Gastrocnemius medialis (tissue), 4 donors: ENCODE measurements at regions of chr2 and their contacts with region 1.

Region 1: GRCh38 chr2:176001916-176002687 is at the start of gene LNPK:
- DNase-seq: peak; percentile 89 to 94
- ATAC-seq: peak; percentile 82 to 85
- H3K4me3 ChIP-seq: peak within 1 kb of the TSS; percentile 76 to 90 (median 84)
- H3K27ac ChIP-seq: peak within 1 kb of the TSS; percentile 95 to 98 (median 98)
- H3K4me1 ChIP-seq: peaks cover 32 to 51% of the 10 kb centered on the region in 2 donors
- H3K27me3 ChIP-seq: no peaks in the 10 kb centered on the region
- CTCF ChIP-seq: peak in 2 of 5 experiments; percentile 18 to 25
- POLR2A ChIP-seq: peak; percentile 91 to 94
- total RNA-seq, gene LNPK: 23.0 to 84.4 (median 50.1) TPM

Region 2: GRCh38 chr2:175690113-175690837 is 311.8 kb before region 1 on chr2:
- in situ Hi-C with region 1: no loop called
- intact Hi-C with region 1: loop called (anchors 2 kb)
- DNase-seq: no peak
- ATAC-seq: peak; percentile 69 to 85
- H3K4me3 ChIP-seq: no peak overlapping the region
- H3K27ac ChIP-seq: no peak overlapping the region
- H3K4me1 ChIP-seq: no peaks in the 10 kb centered on the region
- H3K27me3 ChIP-seq: peaks cover 0 to 14% (median 2%) of the 10 kb centered on the region in 3 donors
- CTCF ChIP-seq: peak; percentile 68 to 89 (median 82)
- POLR2A ChIP-seq: no peak

Region 3: GRCh38 chr2:175755169-175755568 is 246.9 kb before region 1 on chr2:
- in situ Hi-C with region 1: no loop called
- intact Hi-C with region 1: loop called (anchors 5 kb)
- DNase-seq: no peak
- ATAC-seq: no peak
- H3K4me3 ChIP-seq: no peak overlapping the region
- H3K27ac ChIP-seq: peak overlapping the region in 1 of 4 donors; percentile 64
- H3K4me1 ChIP-seq: peaks cover 0 to 4% of the 10 kb centered on the region in 2 donors
- H3K27me3 ChIP-seq: no peaks in the 10 kb centered on the region
- CTCF ChIP-seq: no peak
- POLR2A ChIP-seq: no peak

Region 4: GRCh38 chr2:175855794-175856453 is 146.2 kb before region 1 on chr2:
- in situ Hi-C with region 1: no loop called
- intact Hi-C with region 1: loop called (anchors 2 kb)
- DNase-seq: peak; percentile 86 to 93
- ATAC-seq: peak; percentile 96
- H3K4me3 ChIP-seq: peak overlapping the region; percentile 21 to 39 (median 34)
- H3K27ac ChIP-seq: peak overlapping the region; percentile 84 to 91 (median 86)
- H3K4me1 ChIP-seq: peaks cover 30 to 36% of the 10 kb centered on the region in 2 donors
- H3K27me3 ChIP-seq: no peaks in the 10 kb centered on the region
- CTCF ChIP-seq: no peak
- POLR2A ChIP-seq: peak; percentile 36 to 62

Region 5: GRCh38 chr2:175929850-175930249 is 72.3 kb before region 1 on chr2:
- in situ Hi-C with region 1: no loop called
- intact Hi-C with region 1: loop called (anchors 1 kb)
- DNase-seq: peak; percentile 31 to 35
- ATAC-seq: peak; percentile 99
- H3K4me3 ChIP-seq: no peak overlapping the region
- H3K27ac ChIP-seq: peak overlapping the region; percentile 65 to 85 (median 84)
- H3K4me1 ChIP-seq: peaks cover 26 to 33% of the 10 kb centered on the region in 2 donors
- H3K27me3 ChIP-seq: no peaks in the 10 kb centered on the region
- CTCF ChIP-seq: no peak
- POLR2A ChIP-seq: peak; percentile 7 to 42

Region 6: GRCh38 chr2:175957845-175958244 is 44.3 kb before region 1 on chr2:
- in situ Hi-C with region 1: no loop called
- intact Hi-C with region 1: no loop called
- DNase-seq: no peak
- ATAC-seq: no peak
- H3K4me3 ChIP-seq: no peak overlapping the region
- H3K27ac ChIP-seq: no peak overlapping the region
- H3K4me1 ChIP-seq: peaks cover 0 to 7% of the 10 kb centered on the region in 2 donors
- H3K27me3 ChIP-seq: no peaks in the 10 kb centered on the region
- CTCF ChIP-seq: no peak
- POLR2A ChIP-seq: no peak

Region 7: GRCh38 chr2:176079831-176080539 is 77.9 kb after region 1 on chr2:
- in situ Hi-C with region 1: no loop called
- intact Hi-C with region 1: loop called (anchors 2 kb)
- DNase-seq: no peak
- ATAC-seq: peak; percentile 28 to 63
- H3K4me3 ChIP-seq: peak overlapping the region; percentile 12 to 39 (median 29)
- H3K27ac ChIP-seq: no peak overlapping the region
- H3K4me1 ChIP-seq: peaks cover 17 to 21% of the 10 kb centered on the region in 2 donors
- H3K27me3 ChIP-seq: peaks cover 93 to 97% (median 94%) of the 10 kb centered on the region in 3 donors
- CTCF ChIP-seq: peak; percentile 55 to 91 (median 69)
- POLR2A ChIP-seq: no peak

Region 8: DNA sequence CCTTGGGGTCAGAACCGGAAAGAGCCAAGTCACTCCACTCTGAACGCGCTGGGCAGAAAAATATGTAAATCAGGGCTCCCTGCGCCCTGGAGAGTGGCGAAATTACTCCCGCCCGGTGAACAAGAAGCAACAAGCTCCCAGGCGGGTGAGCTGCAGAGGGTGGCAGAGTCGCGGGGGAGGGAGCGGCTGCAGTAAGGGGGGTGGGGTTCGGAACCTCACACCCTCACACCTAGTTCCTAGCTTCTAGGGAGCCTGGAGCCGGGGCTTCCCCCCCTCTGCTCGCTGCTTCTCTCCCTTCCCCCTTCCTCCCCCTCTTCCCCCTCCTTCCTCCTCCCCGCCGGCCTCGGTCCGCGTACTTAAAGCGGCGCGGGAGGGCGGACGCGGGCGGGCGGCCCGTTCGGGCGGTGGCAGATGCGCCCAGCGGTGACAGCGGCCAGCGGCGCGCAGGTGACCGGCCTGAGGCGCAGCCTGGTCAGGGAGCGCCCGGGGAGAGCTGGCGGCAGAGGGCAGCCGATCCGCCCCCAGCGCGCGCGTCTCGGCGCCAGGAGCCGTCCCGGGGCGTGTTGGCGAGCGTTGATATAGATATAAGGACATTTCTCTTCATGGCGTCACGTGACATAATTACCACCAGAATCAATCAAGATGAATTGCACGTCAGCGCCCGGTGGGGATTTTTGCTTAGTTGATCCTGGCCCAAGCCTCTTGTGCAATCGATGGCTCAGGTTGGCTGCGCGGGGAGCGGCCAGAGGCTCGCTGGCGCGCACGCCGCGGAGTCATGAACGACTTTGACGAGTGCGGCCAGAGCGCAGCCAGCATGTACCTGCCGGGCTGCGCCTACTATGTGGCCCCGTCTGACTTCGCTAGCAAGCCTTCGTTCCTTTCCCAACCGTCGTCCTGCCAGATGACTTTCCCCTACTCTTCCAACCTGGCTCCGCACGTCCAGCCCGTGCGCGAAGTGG is 104.8 kb after region 1 on chr2 and contains the start of gene HOXD11:
- in situ Hi-C with region 1: no loop called
- intact Hi-C with region 1: no loop called
- DNase-seq: no peak
- ATAC-seq: peak; percentile 37 to 51
- H3K4me3 ChIP-seq: peak within 1 kb of the TSS; percentile 34 to 52 (median 40)
- H3K27ac ChIP-seq: no peak within 1 kb of the TSS
- H3K4me1 ChIP-seq: peaks cover 14 to 16% of the 10 kb centered on the region in 2 donors
- H3K27me3 ChIP-seq: peaks cover 92 to 96% (median 96%) of the 10 kb centered on the region in 3 donors
- CTCF ChIP-seq: no peak
- POLR2A ChIP-seq: no peak
- total RNA-seq, gene HOXD11: 0.24 TPM in 1 of 4 donors, not detected in the others

Region 9: DNA sequence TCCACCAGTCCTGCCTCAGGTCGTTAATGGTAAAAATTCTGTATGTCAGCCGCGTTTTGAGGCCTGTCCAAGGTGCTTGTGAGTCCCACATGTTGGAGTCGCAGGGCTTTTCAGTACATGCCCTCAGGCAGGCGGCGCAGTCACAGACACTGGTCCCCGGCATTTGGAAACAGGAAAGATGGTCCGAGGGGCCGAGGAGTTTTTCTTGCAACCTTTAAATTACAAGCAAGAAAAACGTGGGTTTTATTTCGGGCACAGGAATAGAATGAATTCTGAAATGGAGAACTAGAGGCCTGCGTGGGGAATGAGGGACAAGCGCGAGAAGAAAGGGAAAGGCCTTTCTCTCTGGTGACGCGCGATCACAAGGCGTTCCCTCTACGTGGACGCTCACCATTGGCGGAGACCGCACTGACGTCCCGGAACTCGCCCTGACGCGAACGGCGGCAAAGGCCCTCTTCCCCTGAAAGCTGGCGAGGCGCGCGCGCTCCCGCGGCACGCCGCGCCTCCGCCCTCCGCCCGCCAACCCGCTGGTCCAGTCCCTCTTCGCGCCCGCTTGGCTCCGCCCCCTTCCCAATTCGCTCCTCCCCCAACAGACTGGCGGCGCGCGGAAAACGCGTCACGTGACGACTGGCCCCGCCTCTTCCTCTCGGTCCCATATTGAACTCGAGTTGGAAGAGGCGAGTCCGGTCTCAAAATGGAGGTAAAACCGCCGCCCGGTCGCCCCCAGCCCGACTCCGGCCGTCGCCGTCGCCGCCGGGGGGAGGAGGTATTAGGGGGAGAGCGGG is 1210.2 kb after region 1 on chr2 and contains the start of gene HNRNPA3:
- in situ Hi-C with region 1: no loop called
- intact Hi-C with region 1: loop called (anchors 2 kb)
- DNase-seq: peak; percentile 98 to 99
- ATAC-seq: peak; percentile 90 to 92
- H3K4me3 ChIP-seq: peak within 1 kb of the TSS; percentile 75 to 92 (median 82)
- H3K27ac ChIP-seq: peak within 1 kb of the TSS; percentile 95 to 100 (median 98)
- H3K4me1 ChIP-seq: peaks cover 46 to 48% of the 10 kb centered on the region in 2 donors
- H3K27me3 ChIP-seq: no peaks in the 10 kb centered on the region
- CTCF ChIP-seq: peak; percentile 10 to 50 (median 47)
- POLR2A ChIP-seq: peak; percentile 91 to 96
- total RNA-seq, gene HNRNPA3: 16.1 to 32.2 (median 22.4) TPM